ENCODE measurements at regions of chr2 and their contacts with region 1.

Region 1: DNA sequence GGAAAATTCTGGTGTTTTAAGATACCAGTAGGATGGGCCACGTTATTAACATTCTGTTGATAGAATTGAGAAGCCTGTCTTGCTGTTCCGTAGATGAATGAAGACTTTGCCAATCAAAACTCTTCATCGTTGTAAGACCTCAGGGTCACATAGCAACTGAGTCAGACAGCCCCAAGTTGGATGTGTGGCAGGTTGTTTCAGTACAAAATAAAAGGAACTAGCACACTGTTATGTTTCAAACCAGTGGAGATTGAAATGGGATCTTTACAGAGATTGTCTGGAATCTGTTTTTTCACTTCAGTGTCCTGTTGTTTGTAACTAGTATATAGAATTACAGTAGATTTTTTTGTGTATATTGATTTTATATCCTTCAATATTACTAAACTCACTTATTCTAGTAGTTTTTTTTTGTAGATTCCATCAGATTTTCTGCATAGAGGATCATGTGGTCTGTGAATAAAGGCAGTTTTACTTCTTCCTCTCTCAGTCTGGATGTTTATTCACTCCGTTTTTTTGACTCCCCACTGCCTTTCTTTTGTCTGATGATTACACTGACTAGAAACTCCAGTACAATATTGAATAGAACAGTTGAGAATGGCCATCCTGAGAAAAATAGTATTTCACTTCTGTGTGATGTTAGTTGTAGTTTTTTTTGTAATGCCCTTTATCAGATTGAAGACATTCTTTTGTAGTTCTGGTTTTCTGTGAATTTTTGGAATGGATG is 22.7 kb downstream of the EPC2 start:
- DNase-seq: no peak
- ATAC-seq: no peak
- H3K4me3 Mint-ChIP-seq: no peak overlapping the region
- H3K27ac Mint-ChIP-seq: no peak overlapping the region
- H3K4me1 Mint-ChIP-seq: peaks cover 71% of the 10 kb centered on the region
- H3K27me3 Mint-ChIP-seq: no peaks in the 10 kb centered on the region
- CTCF ChIP-seq: no peak

Region 2: GRCh38 chr2:148653437-148653836 is 13.8 kb before region 1 on chr2:
- CTCF ChIA-PET with region 1: no interaction called
- POLR2A ChIA-PET with region 1: interaction called, 3 read pairs
- intact Hi-C with region 1: loop called (anchors 2 kb)
- DNase-seq: no peak
- ATAC-seq: peak; percentile 82
- H3K4me3 Mint-ChIP-seq: peak overlapping the region; percentile 61
- H3K27ac Mint-ChIP-seq: peak overlapping the region; percentile 41
- H3K4me1 Mint-ChIP-seq: peaks cover 89% of the 10 kb centered on the region
- H3K27me3 Mint-ChIP-seq: no peaks in the 10 kb centered on the region
- CTCF ChIP-seq: no peak

Region 3: GRCh38 chr2:148680462-148680861 is 13.2 kb after region 1 on chr2:
- CTCF ChIA-PET with region 1: no interaction called
- POLR2A ChIA-PET with region 1: no interaction called
- intact Hi-C with region 1: no loop called
- DNase-seq: no peak
- ATAC-seq: no peak
- H3K4me3 Mint-ChIP-seq: no peak overlapping the region
- H3K27ac Mint-ChIP-seq: no peak overlapping the region
- H3K4me1 Mint-ChIP-seq: peaks cover 46% of the 10 kb centered on the region
- H3K27me3 Mint-ChIP-seq: no peaks in the 10 kb centered on the region
- CTCF ChIP-seq: no peak